ENCODE measurements at regions of chr2 and their contacts with region 1.

Region 1: GRCh38 chr2:105521205-105521604 is 122.4 kb upstream of the FHL2 start:
- DNase-seq: no peak
- H3K4me3 ChIP-seq: no peak overlapping the region
- H3K27ac ChIP-seq: no peak overlapping the region
- H3K27me3 ChIP-seq: peaks cover 6% of the 10 kb centered on the region
- CTCF ChIP-seq: peak; percentile 52

Region 2: DNA sequence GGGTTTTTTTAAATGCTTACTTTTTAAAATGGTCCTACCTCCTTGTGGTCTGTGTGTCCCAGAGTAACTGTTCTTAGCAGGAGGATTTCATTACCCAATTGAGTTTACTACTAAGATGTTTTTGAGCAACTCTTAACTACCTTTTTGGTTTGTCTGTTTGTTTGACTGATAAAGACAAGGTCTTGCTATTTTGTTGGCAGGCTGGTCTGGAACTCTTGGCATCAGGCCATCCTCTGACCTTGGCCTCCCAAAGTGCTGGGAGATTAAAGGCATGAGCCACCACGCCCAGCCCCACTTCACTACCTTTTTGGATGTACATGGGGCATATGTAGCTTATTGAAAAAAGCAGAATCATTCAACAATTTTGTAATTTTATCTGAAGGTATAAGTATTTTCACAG is 468.4 kb before region 1 on chr2:
- CTCF ChIA-PET with region 1: no interaction called
- POLR2A ChIA-PET with region 1: no interaction called
- DNase-seq: no peak
- H3K4me3 ChIP-seq: no peak overlapping the region
- H3K27ac ChIP-seq: no peak overlapping the region
- H3K27me3 ChIP-seq: no peaks in the 10 kb centered on the region
- CTCF ChIP-seq: no peak

Region 3: GRCh38 chr2:105337124-105338019 is 183.8 kb before region 1 on chr2 and contains the start of gene C2orf49:
- CTCF ChIA-PET with region 1: interaction called, 23 read pairs
- POLR2A ChIA-PET with region 1: no interaction called
- DNase-seq: peak; percentile 33
- H3K4me3 ChIP-seq: peak within 1 kb of the TSS; percentile 96
- H3K27ac ChIP-seq: peak within 1 kb of the TSS; percentile 100
- H3K27me3 ChIP-seq: no peaks in the 10 kb centered on the region
- CTCF ChIP-seq: no peak
- polyA plus RNA-seq, gene C2orf49: 13.7 and 20.3 TPM in 2 replicates

Region 4: DNA sequence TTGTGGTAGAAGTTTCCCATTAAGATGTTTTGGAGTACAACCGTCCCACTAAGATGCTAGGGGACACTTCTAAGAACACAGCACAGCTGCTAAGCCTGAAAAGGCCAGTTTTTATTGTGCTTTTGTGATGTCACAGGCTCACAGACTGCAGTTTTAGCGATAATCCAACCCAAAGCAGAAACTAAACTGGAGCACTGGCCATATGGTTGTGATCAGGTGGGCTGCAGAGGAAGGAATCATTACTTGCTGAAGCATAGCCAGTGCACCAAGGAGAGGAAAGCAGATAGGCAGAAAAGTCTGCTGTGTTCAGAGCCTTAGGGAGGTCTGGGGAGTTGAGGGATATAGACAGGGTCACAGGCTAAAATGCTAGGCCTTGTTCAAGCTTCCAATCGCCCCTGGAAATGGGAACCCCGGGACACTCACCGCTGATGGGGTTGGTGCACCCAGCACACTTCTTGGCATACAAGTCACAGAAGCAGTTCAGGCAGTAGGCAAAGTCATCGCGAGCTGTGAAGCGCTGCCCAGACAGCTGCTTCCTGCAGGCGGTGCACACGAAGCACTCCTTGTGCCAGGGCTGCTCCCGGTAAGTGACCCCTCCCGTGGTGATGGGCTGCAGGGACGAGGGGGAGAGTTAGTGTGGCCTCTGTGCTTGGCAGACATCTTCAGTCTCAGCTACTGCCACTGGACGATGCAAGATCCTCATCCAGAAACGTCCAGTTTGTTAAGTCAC is 158.2 kb before region 1 on chr2:
- CTCF ChIA-PET with region 1: interaction called, 41 read pairs
- POLR2A ChIA-PET with region 1: no interaction called
- DNase-seq: no peak
- H3K4me3 ChIP-seq: no peak overlapping the region
- H3K27ac ChIP-seq: peak overlapping the region; percentile 43
- H3K27me3 ChIP-seq: no peaks in the 10 kb centered on the region
- CTCF ChIP-seq: no peak

Region 5: DNA sequence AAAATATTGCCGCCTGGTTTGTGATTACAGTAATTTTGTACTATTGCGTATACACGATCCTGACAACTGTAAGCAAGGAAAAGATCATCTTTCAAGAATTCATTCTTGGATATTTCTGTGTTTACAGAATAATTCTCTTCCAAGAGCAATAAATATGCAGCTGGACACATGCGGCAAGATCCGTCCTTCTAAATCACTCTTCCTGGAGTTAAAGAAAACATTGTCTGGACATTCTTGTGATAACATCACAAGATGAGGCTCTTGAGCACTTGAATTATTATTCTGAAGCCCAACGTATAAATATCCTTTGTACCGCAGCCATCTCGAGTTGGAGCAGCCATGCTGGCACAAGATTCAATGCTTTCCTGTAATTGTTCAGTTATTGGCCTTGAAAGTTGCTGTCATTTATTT is 132.2 kb before region 1 on chr2:
- CTCF ChIA-PET with region 1: interaction called, 13 read pairs
- POLR2A ChIA-PET with region 1: interaction called, 3 read pairs
- DNase-seq: peak; percentile 91
- H3K4me3 ChIP-seq: no peak overlapping the region
- H3K27ac ChIP-seq: peak overlapping the region; percentile 93
- H3K27me3 ChIP-seq: no peaks in the 10 kb centered on the region
- CTCF ChIP-seq: no peak

Region 6: GRCh38 chr2:105403785-105404698 is 117.2 kb before region 1 on chr2:
- CTCF ChIA-PET with region 1: interaction called, 19 read pairs
- POLR2A ChIA-PET with region 1: no interaction called
- DNase-seq: peak; percentile 62
- H3K4me3 ChIP-seq: no peak overlapping the region
- H3K27ac ChIP-seq: peak overlapping the region; percentile 81
- H3K27me3 ChIP-seq: no peaks in the 10 kb centered on the region
- CTCF ChIP-seq: peak; percentile 51